Aorta (tissue), 5 donors: ENCODE measurements at regions of chr4 and their contacts with region 1.

Region 1: DNA sequence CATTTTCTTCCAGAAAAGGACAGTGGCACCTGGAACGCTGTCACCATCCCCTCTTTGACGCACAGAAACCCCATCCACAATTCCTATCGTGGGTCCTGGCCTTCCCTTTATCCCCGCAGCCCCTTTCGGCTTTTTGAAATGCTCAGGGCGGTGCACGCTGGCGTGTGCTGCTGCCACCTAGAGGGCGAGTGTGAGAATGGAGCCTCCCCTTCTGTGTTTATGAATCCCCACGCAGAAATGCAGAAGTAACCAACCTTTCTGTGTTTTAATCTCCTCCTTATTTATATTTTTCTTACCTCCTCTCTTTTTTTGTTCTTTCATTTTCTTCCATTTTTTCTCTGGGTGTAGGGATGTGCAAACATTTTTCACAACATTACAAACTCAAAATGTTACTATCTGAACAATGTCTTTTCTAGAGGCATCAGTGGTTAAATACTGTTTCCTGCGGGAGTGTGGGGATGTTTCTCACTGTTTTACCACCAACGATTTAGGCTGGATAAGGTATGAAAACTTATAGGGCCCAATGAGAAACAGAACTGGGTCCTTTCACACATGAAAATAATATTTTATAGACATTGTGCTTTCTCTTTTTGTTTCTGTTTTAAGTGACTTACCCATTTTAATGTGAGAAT is 50.0 kb downstream of the TMA16 start:
- DNase-seq: peak; percentile 70 to 86
- ATAC-seq: peak; percentile 86
- H3K4me3 ChIP-seq: no peak overlapping the region
- H3K27ac ChIP-seq: no peak overlapping the region
- H3K4me1 ChIP-seq: no peaks in the 10 kb centered on the region
- H3K27me3 ChIP-seq: no peaks in the 10 kb centered on the region

Region 2: GRCh38 chr4:162497564-162498167 is 1046.9 kb before region 1 on chr4:
- intact Hi-C with region 1: loop called in 1 of 2 experiments (anchors 2 kb)
- DNase-seq: no peak
- ATAC-seq: peak; percentile 88
- H3K4me3 ChIP-seq: no peak overlapping the region
- H3K27ac ChIP-seq: no peak overlapping the region
- H3K4me1 ChIP-seq: no peaks in the 10 kb centered on the region
- H3K27me3 ChIP-seq: no peaks in the 10 kb centered on the region

Region 3: GRCh38 chr4:162645381-162645780 is 899.1 kb before region 1 on chr4:
- intact Hi-C with region 1: loop called (anchors 5 to 10 kb)
- DNase-seq: no peak
- ATAC-seq: no peak
- H3K4me3 ChIP-seq: no peak overlapping the region
- H3K27ac ChIP-seq: no peak overlapping the region
- H3K4me1 ChIP-seq: no peaks in the 10 kb centered on the region
- H3K27me3 ChIP-seq: no peaks in the 10 kb centered on the region

Region 4: DNA sequence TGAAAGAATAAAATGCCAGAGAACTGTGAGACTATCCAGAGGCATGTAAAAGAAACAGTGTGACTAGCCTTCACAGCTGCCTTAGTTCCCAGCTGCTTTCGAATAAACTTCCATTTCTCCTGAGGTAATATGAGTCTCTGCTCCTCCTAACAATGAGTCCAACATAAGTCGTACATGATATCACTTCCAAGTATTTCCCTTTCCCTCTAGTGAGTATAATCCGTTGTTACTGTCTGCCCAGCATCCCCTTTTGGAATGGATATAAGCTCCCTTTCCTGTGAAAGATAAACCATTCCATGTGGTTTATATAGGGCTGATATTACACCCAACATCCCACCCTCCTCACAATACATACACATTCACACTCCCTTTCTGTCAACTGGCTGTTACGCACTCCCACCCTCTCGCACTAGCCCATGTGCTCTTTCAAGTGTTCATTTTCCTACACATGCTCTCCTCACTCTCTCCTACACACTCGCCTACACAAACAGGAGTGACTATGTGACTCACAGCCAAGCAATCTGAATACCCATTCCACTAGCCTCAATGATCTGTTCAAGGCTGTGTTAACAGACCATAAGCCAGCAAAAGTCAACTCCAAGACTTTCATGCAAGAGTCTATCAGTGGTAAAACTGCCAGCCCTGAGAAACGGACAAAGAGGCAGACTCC is 382.9 kb before region 1 on chr4:
- intact Hi-C with region 1: no loop called
- DNase-seq: no peak
- ATAC-seq: no peak
- H3K4me3 ChIP-seq: no peak overlapping the region
- H3K27ac ChIP-seq: no peak overlapping the region
- H3K4me1 ChIP-seq: peaks cover 0 to 6% of the 10 kb centered on the region in 2 donors
- H3K27me3 ChIP-seq: no peaks in the 10 kb centered on the region

Region 5: DNA sequence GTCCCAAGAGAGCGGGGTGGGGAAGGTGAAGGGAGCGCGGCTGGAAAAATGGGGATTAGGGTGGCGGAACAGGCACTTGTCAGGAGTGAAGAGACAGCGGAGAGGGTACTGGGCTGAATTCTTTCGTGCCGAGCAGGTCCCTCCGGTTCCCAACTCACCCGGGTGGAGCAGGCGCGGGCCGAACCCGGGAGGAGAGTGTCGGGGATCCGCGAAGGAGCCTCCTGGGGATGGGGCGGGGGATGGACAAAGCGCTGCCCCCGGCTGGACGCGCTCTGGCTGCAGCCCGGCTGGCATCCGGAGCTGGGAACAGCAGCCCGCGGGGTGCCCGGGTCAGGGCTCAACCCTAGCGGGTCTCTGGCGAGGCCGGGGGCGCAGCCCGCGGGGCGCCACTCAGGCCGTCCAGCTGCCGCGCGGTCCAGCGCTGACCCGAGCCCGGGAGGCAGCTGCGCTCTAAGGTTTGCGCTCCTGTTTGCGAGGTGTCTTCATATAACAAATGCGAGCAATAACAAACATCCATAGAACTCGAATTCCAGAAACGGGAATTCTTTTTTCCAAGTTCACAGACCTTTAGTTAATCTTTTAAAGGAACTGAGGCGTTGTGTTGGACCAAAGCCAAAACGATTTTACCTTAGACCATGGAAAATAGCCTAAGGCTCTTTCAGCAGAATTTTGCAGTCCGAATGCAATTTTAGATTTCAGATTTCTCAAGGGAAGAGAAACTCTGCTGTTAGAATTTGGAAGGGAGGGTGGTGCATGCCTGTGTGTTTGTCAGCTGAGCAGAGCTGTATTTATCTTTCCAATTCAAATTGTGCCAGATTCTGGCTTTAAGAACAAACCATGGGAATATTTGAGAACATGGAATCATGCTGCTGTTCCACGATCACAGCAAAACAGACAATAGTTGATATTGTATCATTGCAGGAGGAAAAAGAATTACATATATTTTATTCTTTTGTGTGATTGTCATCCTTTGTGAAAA is 200.1 kb before region 1 on chr4:
- intact Hi-C with region 1: loop called in 1 of 2 experiments (anchors 10 kb)
- DNase-seq: peak; percentile 55 to 82
- ATAC-seq: peak; percentile 83
- H3K4me3 ChIP-seq: peak overlapping the region; percentile 77 to 85
- H3K27ac ChIP-seq: peak overlapping the region; percentile 49 to 52
- H3K4me1 ChIP-seq: no peaks in the 10 kb centered on the region
- H3K27me3 ChIP-seq: no peaks in the 10 kb centered on the region

Region 6: DNA sequence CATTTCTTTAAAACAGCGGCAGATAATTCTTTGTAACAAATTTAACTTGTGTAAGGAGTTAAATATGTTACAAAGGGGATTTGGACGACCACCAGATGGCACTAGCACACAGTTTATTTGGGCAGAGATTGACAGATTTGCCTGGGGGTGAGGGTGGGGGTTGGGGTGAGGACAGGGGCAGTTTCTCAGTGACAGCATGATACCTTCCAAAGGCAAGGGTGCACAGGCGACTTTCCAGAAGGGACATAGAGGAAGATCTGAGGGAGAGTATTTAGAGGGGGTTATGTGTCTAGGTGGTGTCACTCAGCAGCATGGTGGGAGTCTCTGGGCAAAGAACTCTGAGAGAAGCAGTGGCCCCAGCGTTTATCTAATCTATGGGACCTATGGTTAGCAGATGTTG is 59.6 kb before region 1 on chr4:
- intact Hi-C with region 1: loop called (anchors 5 kb)
- DNase-seq: no peak
- ATAC-seq: no peak
- H3K4me3 ChIP-seq: no peak overlapping the region
- H3K27ac ChIP-seq: no peak overlapping the region
- H3K4me1 ChIP-seq: no peaks in the 10 kb centered on the region
- H3K27me3 ChIP-seq: no peaks in the 10 kb centered on the region

Region 7: GRCh38 chr4:163494360-163495162 is 50.0 kb before region 1 on chr4 and contains the start of gene TMA16:
- intact Hi-C with region 1: loop called (anchors 5 kb)
- DNase-seq: peak; percentile 93 to 95
- ATAC-seq: peak; percentile 96
- H3K4me3 ChIP-seq: peak within 1 kb of the TSS; percentile 84 to 85
- H3K27ac ChIP-seq: peak within 1 kb of the TSS in 1 of 2 donors; percentile 71
- H3K4me1 ChIP-seq: no peaks in the 10 kb centered on the region
- H3K27me3 ChIP-seq: no peaks in the 10 kb centered on the region
- total RNA-seq, gene TMA16: 26.2 to 27.3 TPM

Region 8: DNA sequence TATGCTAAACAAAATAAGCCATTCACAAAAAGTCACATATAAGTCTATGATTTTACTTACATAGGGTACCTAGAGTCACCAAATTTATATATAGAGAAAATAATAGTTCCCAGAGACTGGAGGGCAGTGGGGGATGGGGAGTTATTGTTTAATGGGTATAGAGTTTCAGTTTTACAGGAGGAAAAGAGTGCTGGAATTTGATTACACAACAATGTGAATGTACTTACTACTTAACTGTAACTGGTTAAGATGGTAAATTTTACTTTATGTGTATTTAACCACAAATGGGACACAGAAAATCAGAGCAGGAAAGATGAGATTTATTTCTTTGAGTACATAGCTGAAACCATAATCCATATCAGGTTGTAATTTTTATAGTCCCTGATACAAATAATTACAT is 94.4 kb after region 1 on chr4:
- intact Hi-C with region 1: no loop called
- DNase-seq: no peak
- ATAC-seq: no peak
- H3K4me3 ChIP-seq: no peak overlapping the region
- H3K27ac ChIP-seq: no peak overlapping the region
- H3K4me1 ChIP-seq: no peaks in the 10 kb centered on the region
- H3K27me3 ChIP-seq: no peaks in the 10 kb centered on the region